ENCODE measurements at regions of chrX and their contacts with region 1.

Region 1: DNA sequence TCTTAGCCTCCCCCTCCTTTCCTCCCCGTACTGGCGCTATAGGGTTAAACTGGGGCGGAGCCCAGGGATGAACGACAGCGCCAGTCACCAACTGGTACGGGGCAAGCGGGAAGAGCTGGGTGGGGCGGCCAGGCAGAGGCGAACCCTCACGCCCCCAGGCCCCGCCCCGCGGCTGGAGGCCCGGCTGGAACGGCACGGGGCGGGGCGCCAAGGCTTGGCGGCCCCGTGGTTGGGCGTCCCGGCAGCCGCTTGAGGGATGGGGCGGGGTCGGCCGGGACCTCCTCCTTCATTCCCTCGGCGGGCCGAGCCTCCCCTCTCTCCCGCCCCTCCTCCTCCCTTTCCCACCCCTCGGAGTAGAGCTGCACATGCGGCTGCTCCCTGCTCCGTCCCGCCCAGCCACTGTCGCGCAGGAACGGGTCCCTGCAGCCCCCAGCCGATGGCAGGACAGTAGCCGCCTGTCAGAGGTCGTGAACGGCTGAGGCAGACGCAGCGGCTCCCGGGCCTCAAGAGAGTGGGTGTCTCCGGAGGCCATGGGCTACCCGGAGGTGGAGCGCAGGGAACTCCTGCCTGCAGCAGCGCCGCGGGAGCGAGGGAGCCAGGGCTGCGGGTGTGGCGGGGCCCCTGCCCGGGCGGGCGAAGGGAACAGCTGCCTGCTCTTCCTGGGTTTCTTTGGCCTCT is at the start of gene EDA:
- DNase-seq: peak; percentile 94
- ATAC-seq: peak; percentile 97
- total RNA-seq, gene EDA: 12.8 TPM

Region 2: DNA sequence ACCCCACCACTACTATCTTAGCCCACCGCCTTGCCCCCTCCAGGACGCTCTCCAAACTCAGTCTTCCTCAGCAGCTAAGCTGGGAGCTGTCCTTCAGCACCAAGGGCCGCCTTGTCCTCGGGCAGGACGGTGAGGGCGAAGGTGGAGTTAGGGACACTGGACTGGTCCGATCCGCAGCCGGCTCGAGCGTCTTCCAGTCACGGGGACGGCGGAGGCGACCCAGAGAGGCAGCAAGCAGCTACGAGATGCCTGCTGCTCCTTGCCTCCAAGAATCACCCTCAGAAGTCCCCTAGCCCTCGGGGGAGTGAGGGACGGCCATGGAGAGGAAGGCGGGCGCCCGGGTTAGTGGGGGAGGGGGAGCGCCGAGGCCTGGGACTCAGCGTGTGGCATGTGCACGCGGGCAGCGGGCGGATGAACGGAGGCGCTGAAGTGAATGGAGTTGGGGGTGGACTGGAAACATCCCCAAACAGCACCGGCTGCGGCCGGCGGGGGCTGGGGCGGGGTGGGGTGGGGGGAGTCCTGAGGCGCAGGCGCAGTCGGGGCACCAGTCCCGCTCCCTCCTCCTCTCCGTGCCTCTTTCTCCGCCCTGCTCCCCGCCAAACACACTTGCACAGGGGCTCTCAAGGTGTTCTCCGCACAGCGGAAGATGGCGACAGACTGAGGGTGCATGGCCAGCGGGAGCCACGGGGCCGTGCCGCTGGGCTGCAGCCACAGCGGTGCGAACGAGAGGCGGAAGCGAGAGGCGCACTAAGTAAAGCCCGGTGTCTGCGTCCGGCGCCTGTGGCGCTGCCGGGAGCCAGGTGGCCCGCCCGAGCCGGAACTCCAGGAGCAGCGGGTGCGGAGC is 111.9 kb before region 1 on chrX and contains the start of gene NALF2:
- intact Hi-C with region 1: no loop called
- DNase-seq: peak; percentile 71
- ATAC-seq: peak; percentile 70
- total RNA-seq, gene NALF2: 53.3 TPM

Region 3: GRCh38 chrX:70025464-70025863 is 409.5 kb after region 1 on chrX:
- intact Hi-C with region 1: loop called (anchors 10 kb)
- DNase-seq: no peak
- ATAC-seq: peak; percentile 51

Measured in left ventricle myocardium superior (tissue), 1 donor.